Gastrocnemius medialis (tissue), 4 donors: ENCODE measurements at regions of chr10 and their contacts with region 1.

Region 1: DNA sequence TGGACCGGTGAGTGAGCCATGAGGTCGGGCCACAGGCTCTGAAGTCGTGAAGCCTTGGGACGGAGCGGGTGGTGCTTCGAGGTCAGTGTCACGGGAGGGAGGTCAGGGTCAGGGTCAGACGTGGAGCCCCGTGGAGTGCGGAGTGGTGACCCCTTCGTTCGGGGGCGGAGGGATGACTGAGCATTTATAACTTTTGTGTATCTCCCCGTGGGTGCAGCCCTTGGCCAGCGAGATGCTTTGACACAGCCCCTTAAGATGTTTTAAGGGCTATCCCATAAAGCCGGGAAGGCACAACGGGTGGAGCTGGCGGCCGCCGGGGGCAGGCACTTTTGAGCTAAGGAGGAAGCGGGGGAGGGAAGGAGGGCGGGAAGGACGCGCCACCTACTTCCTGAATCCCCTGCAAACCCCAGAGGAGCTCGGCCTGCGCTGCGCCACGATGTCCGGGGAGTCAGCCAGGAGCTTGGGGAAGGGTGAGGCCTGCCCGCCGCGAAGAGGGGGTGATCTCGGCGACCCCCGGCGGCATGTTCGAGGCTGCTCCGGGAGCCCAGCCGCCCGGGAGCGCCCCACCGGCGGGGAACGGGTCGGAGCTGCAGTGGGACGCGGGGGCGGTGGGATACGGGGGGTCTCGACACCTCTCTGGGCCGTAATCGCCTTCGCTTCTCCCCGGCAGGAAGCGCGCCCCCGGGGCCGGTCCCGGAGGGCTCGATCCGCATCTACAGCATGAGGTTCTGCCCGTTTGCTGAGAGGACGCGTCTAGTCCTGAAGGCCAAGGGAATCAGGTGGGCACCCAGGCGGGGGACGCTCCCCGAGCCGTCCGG is at the start of gene GSTO1:
- DNase-seq: peak; percentile 65 to 74
- ATAC-seq: peak; percentile 68
- H3K4me3 ChIP-seq: peak within 1 kb of the TSS; percentile 75 to 87 (median 82)
- H3K27ac ChIP-seq: peak within 1 kb of the TSS; percentile 89 to 96 (median 94)
- H3K4me1 ChIP-seq: peaks cover 27 to 32% of the 10 kb centered on the region in 2 donors
- H3K27me3 ChIP-seq: no peaks in the 10 kb centered on the region
- CTCF ChIP-seq: peak in 1 of 5 experiments; percentile 16
- POLR2A ChIP-seq: peak; percentile 64 to 71
- total RNA-seq, gene GSTO1: 39.6 to 284 (median 74.2) TPM

Region 2: DNA sequence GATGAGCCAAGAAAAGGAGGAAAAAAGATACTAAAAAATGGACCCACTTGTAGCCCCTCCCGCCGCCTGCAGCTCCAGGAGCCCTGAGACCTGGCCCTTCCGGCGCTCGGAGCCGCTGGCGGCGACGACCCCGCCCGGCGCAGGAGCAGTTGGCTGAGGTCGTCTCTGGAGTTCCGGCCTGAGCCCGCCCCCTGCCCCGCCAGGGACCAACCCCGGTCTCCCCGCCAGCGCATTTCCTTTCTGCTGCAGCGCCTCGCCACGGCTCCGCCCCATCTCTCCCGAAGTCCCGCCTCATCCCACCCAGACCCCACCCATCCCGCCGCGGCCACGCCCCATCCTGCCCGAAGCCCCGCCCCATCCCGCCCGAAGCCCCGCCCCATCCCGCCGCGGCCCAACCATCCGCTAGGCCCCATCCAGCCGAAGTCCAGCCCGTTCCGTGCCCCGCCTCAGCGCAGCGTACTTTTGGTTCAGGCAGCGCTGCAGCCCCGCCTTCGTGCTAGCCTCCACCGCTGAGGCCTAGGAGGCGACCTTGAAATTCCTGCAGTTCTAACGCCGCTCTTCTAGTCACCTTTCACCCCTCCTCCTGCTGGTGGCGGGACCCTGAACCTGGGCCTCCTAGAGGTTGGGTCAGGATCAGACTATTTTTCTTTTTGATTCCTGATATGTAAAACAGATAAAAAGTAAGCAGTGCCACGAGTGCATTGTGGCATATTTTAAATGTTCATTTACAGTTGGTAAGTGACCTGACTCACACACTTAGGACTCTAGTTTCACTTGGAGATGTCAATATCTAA is 336.5 kb before region 1 on chr10 and contains the start of gene STN1:
- in situ Hi-C with region 1: no loop called
- intact Hi-C with region 1: loop called (anchors 2 kb)
- DNase-seq: peak; percentile 98
- ATAC-seq: peak; percentile 90 to 92
- H3K4me3 ChIP-seq: peak within 1 kb of the TSS; percentile 85 to 95 (median 89)
- H3K27ac ChIP-seq: peak within 1 kb of the TSS; percentile 92 to 98 (median 96)
- H3K4me1 ChIP-seq: peaks cover 31 to 33% of the 10 kb centered on the region in 2 donors
- H3K27me3 ChIP-seq: no peaks in the 10 kb centered on the region
- CTCF ChIP-seq: peak in 1 of 5 experiments; percentile 12
- POLR2A ChIP-seq: peak; percentile 96 to 97
- total RNA-seq, gene STN1: 15.1 to 24.7 (median 20.5) TPM

Region 3: DNA sequence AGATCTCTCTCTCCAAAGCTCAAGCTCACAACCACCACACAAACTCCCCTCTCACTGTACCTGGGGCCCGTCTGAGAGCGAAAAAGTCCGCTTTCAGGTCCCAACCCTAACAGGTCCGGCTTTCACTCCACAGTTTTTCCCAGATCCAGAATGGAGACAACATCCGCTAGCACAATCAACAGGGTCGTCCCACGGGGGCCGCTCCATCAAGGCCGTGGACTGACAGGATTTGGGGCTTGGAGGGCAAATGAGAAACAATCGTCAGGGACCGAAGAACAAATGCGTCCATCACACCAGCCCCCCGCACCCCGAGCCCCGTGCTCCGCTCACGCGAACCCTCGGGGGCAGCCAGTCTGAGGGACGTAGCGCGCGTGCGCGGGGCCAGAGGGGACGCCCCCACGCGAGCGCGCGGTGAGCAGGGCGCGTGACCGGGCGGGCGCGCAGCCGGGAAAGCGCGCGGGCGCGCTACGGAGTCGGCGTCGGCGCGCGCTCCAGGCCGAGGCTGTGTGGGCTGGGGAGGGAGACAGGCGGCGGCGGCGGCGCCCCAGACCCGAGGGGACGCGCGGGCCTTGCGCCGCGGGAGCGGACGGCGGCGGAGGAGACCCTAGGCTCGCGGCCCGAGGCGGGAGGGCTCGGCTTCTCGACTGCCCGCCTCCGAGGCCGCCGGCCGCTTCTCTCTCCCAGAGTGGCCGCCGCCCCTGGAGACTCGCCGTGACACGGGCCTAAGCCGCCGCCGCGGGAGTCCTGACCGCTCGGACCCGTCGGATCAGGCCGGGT is 287.8 kb before region 1 on chr10 and contains the start of gene SLK:
- in situ Hi-C with region 1: no loop called
- intact Hi-C with region 1: loop called (anchors 10 kb)
- DNase-seq: peak; percentile 68 to 80
- ATAC-seq: peak; percentile 88 to 91
- H3K4me3 ChIP-seq: peak within 1 kb of the TSS; percentile 71 to 97 (median 82)
- H3K27ac ChIP-seq: peak within 1 kb of the TSS; percentile 89 to 99 (median 92)
- H3K4me1 ChIP-seq: peaks cover 32 to 34% of the 10 kb centered on the region in 2 donors
- H3K27me3 ChIP-seq: no peaks in the 10 kb centered on the region
- CTCF ChIP-seq: peak in 1 of 5 experiments; percentile 20
- POLR2A ChIP-seq: peak; percentile 98
- total RNA-seq, gene SLK: 43.3 to 53.3 (median 49.8) TPM

Region 4: GRCh38 chr10:103977204-103977603 is 277.5 kb before region 1 on chr10:
- in situ Hi-C with region 1: no loop called
- intact Hi-C with region 1: no loop called
- DNase-seq: no peak
- ATAC-seq: no peak
- H3K4me3 ChIP-seq: no peak overlapping the region
- H3K27ac ChIP-seq: no peak overlapping the region
- H3K4me1 ChIP-seq: peaks cover 15 to 18% of the 10 kb centered on the region in 2 donors
- H3K27me3 ChIP-seq: no peaks in the 10 kb centered on the region
- CTCF ChIP-seq: no peak
- POLR2A ChIP-seq: no peak

Region 5: DNA sequence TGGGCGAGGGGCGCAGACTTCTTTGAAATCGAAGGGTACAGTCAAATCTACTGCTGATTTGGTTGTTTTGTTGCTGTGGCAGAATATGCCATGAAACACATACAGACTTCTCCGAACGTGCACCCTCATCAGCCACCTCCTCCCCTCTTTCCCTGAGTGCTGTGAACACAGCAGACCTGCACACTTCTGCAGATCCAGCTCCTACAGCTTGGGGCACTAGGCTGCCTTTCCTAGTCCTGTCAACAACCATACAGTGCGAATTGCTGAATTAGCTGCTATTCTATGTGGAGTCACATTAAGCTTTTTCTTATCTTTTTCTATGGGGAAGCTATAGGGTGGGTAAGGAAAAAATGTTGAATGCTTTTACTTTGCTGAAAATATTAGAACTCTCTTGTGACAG is 226.6 kb before region 1 on chr10:
- in situ Hi-C with region 1: no loop called
- intact Hi-C with region 1: loop called (anchors 5 kb)
- DNase-seq: no peak
- ATAC-seq: peak in 1 of 2 donors; percentile 60
- H3K4me3 ChIP-seq: no peak overlapping the region
- H3K27ac ChIP-seq: no peak overlapping the region
- H3K4me1 ChIP-seq: peaks cover 0 to 11% of the 10 kb centered on the region in 2 donors
- H3K27me3 ChIP-seq: no peaks in the 10 kb centered on the region
- CTCF ChIP-seq: peak in 2 of 5 experiments; percentile 21 to 25
- POLR2A ChIP-seq: no peak

Region 6: DNA sequence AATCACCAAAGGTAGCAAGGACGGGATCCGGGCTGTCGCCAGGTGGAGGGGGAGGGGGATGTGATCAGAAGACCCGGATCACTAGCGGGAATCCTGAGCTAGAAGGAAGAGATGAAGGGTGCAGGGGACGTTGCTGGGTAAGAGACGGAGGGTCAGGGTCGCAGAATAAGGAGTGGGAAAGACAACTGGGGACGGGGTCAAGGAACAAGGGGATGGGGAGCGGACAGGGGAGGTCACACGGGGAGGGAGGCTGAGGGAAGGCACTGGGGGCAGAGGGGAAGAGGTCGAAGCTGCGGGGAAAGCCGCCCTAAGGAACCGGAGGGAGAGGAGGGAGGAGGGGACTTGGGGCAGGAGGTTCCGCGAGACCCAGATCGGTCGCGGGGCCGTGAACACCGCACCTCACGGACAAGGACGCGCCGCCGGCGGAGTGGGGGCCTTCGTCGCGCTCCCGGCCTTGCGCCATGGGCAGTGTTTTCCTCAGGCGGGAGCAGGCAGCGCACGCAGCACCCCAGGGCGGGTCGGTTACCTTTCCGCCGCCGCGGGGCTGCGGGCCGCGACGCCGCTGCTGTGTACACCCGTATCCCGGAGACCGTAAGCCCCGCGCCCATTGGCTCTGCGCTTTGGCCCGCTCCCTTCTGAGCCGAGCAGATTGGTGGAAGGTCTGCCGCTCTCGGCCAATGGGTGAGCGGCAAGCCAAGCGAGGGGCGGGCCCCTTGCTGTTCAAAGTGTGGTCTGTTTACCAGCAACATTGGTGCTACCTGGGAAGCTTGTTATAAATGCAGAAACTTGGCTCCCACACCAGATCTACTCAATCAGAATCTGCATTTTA is 22.7 kb before region 1 on chr10 and contains the start of gene CFAP43:
- in situ Hi-C with region 1: no loop called
- intact Hi-C with region 1: no loop called
- DNase-seq: peak; percentile 97 to 98
- ATAC-seq: peak; percentile 100
- H3K4me3 ChIP-seq: peak within 1 kb of the TSS; percentile 72 to 86 (median 80)
- H3K27ac ChIP-seq: peak within 1 kb of the TSS in 1 of 4 donors; percentile 24
- H3K4me1 ChIP-seq: peaks cover 8 to 9% of the 10 kb centered on the region in 2 donors
- H3K27me3 ChIP-seq: no peaks in the 10 kb centered on the region
- CTCF ChIP-seq: no peak
- POLR2A ChIP-seq: no peak
- total RNA-seq, gene CFAP43: not detected

Region 7: GRCh38 chr10:104268716-104269645 is 14.3 kb after region 1 on chr10 and contains the start of gene GSTO2:
- in situ Hi-C with region 1: no loop called
- intact Hi-C with region 1: no loop called
- DNase-seq: peak; percentile 99 to 100
- ATAC-seq: peak; percentile 99
- H3K4me3 ChIP-seq: peak within 1 kb of the TSS; percentile 76 to 100 (median 86)
- H3K27ac ChIP-seq: peak within 1 kb of the TSS; percentile 87 to 93 (median 89)
- H3K4me1 ChIP-seq: peaks cover 8 to 11% of the 10 kb centered on the region in 2 donors
- H3K27me3 ChIP-seq: no peaks in the 10 kb centered on the region
- CTCF ChIP-seq: no peak
- POLR2A ChIP-seq: peak; percentile 63 to 81
- total RNA-seq, gene GSTO2: 0.71 to 2.3 (median 1.4) TPM in 3 of 4 donors, not detected in the other